Dendritic cell treated with granulocyte-macrophage colony-stimulating factor and Interleukin-4, amounts not matched to agents 40 ng/mL and 50 ng/mL, for 4 days (primary cell): ENCODE measurements at regions of chr3 and their contacts with region 1.

Region 1: GRCh38 chr3:87082796-87083440 is 92.0 kb upstream of the VGLL3 start:
- H3K4me3 Mint-ChIP-seq: no peak overlapping the region
- H3K27ac Mint-ChIP-seq: no peak overlapping the region
- H3K4me1 Mint-ChIP-seq: no peaks in the 10 kb centered on the region
- H3K27me3 Mint-ChIP-seq: no peaks in the 10 kb centered on the region

Region 2: GRCh38 chr3:86634361-86634760 is 448.6 kb before region 1 on chr3:
- intact Hi-C with region 1: no loop called
- H3K4me3 Mint-ChIP-seq: no peak overlapping the region
- H3K27ac Mint-ChIP-seq: no peak overlapping the region
- H3K4me1 Mint-ChIP-seq: no peaks in the 10 kb centered on the region
- H3K27me3 Mint-ChIP-seq: no peaks in the 10 kb centered on the region

Region 3: GRCh38 chr3:86702381-86702958 is 380.4 kb before region 1 on chr3:
- intact Hi-C with region 1: loop called (anchors 5 kb)
- H3K4me3 Mint-ChIP-seq: no peak overlapping the region
- H3K27ac Mint-ChIP-seq: no peak overlapping the region
- H3K4me1 Mint-ChIP-seq: no peaks in the 10 kb centered on the region
- H3K27me3 Mint-ChIP-seq: no peaks in the 10 kb centered on the region

Region 4: GRCh38 chr3:86774082-86774691 is 308.7 kb before region 1 on chr3:
- intact Hi-C with region 1: loop called (anchors 10 kb)
- H3K4me3 Mint-ChIP-seq: no peak overlapping the region
- H3K27ac Mint-ChIP-seq: no peak overlapping the region
- H3K4me1 Mint-ChIP-seq: no peaks in the 10 kb centered on the region
- H3K27me3 Mint-ChIP-seq: no peaks in the 10 kb centered on the region

Region 5: DNA sequence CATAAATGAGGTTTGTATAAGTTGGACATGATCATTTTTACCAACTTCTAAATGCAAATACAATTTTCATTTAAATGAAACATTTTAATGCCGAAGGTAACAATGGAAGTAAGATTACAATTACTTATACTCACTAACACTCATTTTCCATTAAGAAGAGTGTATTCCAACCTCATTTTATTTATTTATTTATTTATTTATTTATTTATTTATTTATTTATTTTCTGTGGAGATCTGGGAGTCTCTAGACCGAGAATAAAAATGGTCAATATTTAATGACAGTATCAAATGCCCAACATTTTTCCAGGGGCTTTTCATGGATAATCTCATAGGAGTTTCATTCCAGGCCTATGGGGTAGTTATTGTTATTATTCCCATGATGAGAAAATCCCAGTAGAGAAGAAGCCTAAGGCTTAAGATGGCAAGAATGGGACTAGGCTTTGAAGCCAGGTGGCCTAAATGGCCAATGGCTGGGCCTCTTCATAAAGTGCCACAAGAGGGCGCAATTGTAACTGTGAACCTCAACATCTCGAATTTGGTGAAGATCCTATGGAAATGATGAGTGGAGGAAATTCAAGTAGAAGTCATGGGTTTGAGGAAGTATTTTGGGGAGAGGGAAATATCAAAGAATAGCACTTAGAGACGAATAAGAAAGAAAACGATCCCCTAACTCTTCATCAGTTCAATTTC is 113.3 kb before region 1 on chr3:
- intact Hi-C with region 1: loop called (anchors 1 kb)
- H3K4me3 Mint-ChIP-seq: no peak overlapping the region
- H3K27ac Mint-ChIP-seq: no peak overlapping the region
- H3K4me1 Mint-ChIP-seq: no peaks in the 10 kb centered on the region
- H3K27me3 Mint-ChIP-seq: peaks cover 2% of the 10 kb centered on the region

Region 6: GRCh38 chr3:87109465-87109864 is 26.5 kb after region 1 on chr3:
- intact Hi-C with region 1: no loop called
- H3K4me3 Mint-ChIP-seq: no peak overlapping the region
- H3K27ac Mint-ChIP-seq: no peak overlapping the region
- H3K4me1 Mint-ChIP-seq: no peaks in the 10 kb centered on the region
- H3K27me3 Mint-ChIP-seq: no peaks in the 10 kb centered on the region